Activated T-helper 1 cell treated with anti-CD3 and anti-CD28 coated beads, Interleukin-12 subunit alpha, Interleukin-12 subunit beta, Interleukin-2, Interleukin-4 antibody, amounts not matched to agents 30 ng/mL and 10 ng/mL and 1 ng/mL, durations not matched to agents 14 hours and 24 hours and 36 hours (primary cell): ENCODE measurements at regions of chr9 and their contacts with region 1.

Region 1: DNA sequence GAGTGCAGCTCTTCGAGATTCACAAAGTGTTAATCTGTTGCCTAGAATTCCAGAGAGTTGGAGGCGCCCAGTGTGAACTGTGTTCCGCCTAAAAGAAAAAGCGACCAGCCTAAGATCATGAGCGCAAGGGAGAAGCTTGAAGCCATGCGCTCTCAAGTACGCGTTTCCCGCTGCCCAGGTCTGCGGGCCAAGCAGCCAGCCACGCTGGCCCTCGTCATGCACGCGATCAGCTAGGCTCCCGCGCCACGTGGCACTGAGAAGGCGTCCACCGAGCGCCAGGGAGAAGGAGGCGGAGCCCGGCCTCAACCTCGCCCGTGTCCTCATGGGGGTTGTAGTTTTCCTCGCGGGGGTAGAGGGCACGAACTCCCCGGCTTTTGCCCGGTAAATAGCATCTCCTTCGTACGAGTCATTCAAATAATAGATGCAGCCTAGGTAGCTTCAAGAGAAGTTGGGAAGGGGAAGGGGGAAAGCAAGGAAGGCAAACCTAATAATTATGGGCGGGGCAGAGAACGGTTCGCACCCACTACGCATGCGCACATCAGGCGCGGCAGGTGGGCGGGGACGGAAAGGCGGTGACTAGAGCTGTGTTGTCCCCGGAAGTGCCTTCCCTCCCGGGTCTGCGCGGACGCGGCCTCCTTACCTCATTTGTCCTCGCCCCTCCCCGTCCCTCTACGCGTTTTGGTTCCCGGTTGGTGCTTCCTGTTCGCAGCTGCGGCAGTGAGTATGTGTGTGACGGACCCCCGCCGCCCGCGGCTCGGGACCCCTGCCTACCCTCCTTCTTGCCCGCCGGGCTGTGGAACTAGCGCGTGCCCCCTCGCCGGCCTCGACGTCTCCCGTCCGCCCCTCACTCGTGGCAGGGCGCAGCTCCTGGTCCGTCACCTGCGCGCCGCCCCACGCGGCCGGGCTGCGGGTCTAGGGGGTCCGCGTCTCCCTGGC is at the start of gene ZCCHC7:
- DNase-seq: peak; percentile 95
- H3K4me3 Mint-ChIP-seq: peak within 1 kb of the TSS; percentile 97
- H3K27ac Mint-ChIP-seq: peak within 1 kb of the TSS; percentile 99
- H3K4me1 Mint-ChIP-seq: peaks cover 32% of the 10 kb centered on the region
- H3K27me3 Mint-ChIP-seq: no peaks in the 10 kb centered on the region
- total RNA-seq, gene ZCCHC7: 22.1 and 26.0 TPM in 2 replicates

Region 2: GRCh38 chr9:36400332-36401163 is 719.6 kb before region 1 on chr9:
- intact Hi-C with region 1: loop called (anchors 2 kb)
- DNase-seq: peak; percentile 86
- H3K4me3 Mint-ChIP-seq: peak overlapping the region; percentile 89
- H3K27ac Mint-ChIP-seq: peak overlapping the region; percentile 97
- H3K4me1 Mint-ChIP-seq: peaks cover 47% of the 10 kb centered on the region
- H3K27me3 Mint-ChIP-seq: no peaks in the 10 kb centered on the region

Region 3: DNA sequence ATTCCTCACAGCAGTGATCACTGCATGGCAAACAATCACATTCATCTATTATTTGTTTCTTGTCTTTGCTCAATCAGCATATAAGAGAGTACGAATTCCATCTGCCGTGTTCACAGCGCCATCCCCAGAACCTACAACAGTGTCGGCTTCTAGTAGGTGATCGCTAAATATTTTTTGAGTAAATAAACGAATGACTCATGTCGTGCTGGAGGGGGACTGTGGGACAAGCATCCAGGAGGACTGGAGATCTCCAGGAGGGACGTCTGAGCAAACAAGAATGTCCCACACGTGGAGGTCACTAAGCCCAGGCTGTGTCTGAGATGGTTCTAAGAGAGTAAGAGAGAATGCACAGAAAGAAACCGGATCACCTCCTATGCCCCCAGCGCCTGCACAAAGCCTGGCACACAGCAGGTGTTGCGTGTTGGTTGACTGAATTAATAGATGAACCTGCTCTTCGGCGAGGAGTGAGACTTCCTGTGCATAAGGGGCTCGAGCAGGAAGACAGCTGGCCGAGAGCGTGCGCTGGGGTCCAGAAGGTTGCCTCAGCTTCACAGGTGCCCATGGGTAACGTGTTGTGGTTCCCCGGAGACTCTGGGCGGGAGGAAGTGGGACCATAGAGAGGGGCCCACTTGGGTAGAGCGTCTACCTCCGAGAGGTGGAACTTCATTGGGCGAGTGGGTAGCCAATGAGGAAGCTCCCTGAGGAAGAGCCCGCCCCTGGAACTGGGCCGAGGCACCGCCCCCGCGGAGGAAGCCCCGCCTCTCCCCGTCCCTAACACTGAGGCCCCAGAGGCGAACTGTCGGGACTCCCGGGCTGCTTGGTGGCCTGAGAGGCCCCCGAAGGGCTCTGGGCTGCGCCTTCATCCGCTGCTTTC is 354.5 kb before region 1 on chr9:
- intact Hi-C with region 1: loop called (anchors 5 kb)
- DNase-seq: peak; percentile 81
- H3K4me3 Mint-ChIP-seq: peak overlapping the region; percentile 46
- H3K27ac Mint-ChIP-seq: no peak overlapping the region
- H3K4me1 Mint-ChIP-seq: no peaks in the 10 kb centered on the region
- H3K27me3 Mint-ChIP-seq: peaks cover 4% of the 10 kb centered on the region

Region 4: GRCh38 chr9:37036776-37037502 is 83.2 kb before region 1 on chr9:
- intact Hi-C with region 1: loop called (anchors 2 kb)
- DNase-seq: peak; percentile 30
- H3K4me3 Mint-ChIP-seq: peak overlapping the region; percentile 72
- H3K27ac Mint-ChIP-seq: peak overlapping the region; percentile 46
- H3K4me1 Mint-ChIP-seq: peaks cover 25% of the 10 kb centered on the region
- H3K27me3 Mint-ChIP-seq: peaks cover 82% of the 10 kb centered on the region

Region 5: DNA sequence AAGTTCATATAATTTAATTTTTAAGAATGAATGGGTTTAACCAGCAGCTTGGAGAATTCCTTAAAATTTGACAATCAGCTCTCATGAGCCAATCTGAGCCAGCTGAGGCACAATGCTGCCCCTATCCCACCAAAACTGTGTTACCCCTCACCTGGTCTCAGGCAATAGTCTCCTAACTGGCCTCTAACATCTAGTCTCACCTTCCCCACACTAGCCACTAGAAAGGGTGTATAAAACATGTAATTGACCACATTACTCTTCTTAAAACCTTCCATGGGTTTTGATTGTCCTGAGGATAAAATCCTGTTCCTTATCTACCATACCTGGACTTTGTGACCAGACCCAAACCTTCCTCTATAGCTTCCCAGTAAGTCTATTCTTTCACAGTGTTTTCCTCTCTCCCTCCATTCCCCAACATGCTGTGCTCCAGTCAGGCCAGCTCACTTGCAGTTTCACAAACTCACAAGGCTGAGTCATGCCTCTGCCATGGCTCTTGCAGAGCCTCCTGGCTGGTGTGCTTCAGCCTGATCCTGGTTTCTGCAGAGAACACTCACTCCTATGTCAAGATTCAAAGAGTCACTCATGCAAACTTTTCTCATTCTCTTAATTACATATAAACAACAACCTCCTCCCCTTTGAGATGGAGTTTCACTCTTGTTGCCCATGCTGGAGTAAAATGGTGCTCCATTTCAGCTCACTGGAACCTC is 15.8 kb before region 1 on chr9:
- intact Hi-C with region 1: no loop called
- DNase-seq: no peak
- H3K4me3 Mint-ChIP-seq: no peak overlapping the region
- H3K27ac Mint-ChIP-seq: no peak overlapping the region
- H3K4me1 Mint-ChIP-seq: peaks cover 26% of the 10 kb centered on the region
- H3K27me3 Mint-ChIP-seq: peaks cover 3% of the 10 kb centered on the region

Region 6: GRCh38 chr9:37209431-37210386 is 89.5 kb after region 1 on chr9:
- intact Hi-C with region 1: loop called (anchors 2 kb)
- DNase-seq: no peak
- H3K4me3 Mint-ChIP-seq: no peak overlapping the region
- H3K27ac Mint-ChIP-seq: no peak overlapping the region
- H3K4me1 Mint-ChIP-seq: peaks cover 40% of the 10 kb centered on the region
- H3K27me3 Mint-ChIP-seq: no peaks in the 10 kb centered on the region

Region 7: GRCh38 chr9:37302277-37302676 is 182.1 kb after region 1 on chr9:
- intact Hi-C with region 1: loop called (anchors 1 kb)
- DNase-seq: peak; percentile 34
- H3K4me3 Mint-ChIP-seq: peak overlapping the region; percentile 57
- H3K27ac Mint-ChIP-seq: peak overlapping the region; percentile 78
- H3K4me1 Mint-ChIP-seq: peaks cover 42% of the 10 kb centered on the region
- H3K27me3 Mint-ChIP-seq: no peaks in the 10 kb centered on the region

Region 8: DNA sequence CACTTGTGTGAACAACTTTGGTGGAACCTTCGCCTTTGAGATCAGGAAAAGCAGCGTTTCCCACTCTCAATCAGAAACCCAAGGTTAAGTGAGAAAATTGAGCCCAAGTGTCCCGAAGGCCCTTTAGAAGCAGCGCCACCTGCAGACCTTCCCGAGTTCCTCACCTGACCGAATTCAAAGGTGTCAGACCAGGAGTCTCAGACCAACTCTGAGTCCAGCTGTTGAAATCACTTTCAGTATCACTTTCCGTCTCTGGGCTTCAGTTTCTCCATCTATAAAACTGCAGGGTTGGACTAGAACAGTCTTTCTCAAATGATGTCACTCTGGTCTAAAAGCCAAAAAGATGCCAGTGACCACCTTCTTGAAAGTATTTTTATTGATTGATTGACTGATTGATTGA is 270.6 kb after region 1 on chr9:
- intact Hi-C with region 1: no loop called
- DNase-seq: no peak
- H3K4me3 Mint-ChIP-seq: no peak overlapping the region
- H3K27ac Mint-ChIP-seq: no peak overlapping the region
- H3K4me1 Mint-ChIP-seq: no peaks in the 10 kb centered on the region
- H3K27me3 Mint-ChIP-seq: peaks cover under 1% of the 10 kb centered on the region

Region 9: DNA sequence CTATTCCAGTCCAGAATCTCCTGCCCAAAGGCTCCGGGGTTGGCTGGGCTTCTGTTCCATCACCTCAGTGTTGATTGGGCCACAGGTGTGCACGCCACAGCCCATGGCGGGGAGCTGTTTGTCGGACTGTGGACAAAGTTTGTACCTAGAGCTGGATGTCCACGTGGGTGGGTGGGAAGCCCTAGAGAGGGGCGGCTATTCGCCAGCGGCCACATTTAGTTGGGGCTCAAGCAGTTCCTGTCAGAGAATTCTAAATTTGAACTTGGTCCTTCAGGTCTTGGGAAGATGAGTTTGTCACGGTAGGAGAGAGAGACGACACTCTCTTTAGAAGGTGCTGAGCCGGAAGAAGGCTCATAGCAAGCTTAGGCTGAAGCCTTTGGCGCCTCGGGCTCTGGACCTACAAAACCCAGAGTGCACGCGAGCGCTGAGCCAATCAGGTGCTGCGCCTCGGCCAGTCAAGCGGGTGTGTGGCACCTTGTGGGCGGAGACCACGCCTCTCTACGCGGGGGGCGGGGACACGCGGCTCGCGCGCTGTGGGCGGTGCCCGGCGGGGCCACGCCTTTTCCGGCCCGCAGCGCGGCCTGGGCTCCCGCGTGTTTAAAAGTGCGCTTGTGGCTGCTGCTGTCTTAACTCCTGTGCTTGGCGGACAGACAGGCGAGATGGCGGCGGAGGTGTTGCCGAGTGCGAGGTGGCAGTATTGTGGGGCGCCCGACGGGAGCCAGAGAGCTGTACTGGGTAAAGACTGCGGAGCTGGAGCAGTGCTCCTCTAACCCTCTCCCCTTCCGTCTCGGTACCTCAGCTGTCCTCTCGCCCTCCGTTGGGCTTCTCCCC is 365.4 kb after region 1 on chr9 and contains the start of gene POLR1E:
- intact Hi-C with region 1: loop called (anchors 1 kb)
- DNase-seq: peak; percentile 95
- H3K4me3 Mint-ChIP-seq: peak within 1 kb of the TSS; percentile 96
- H3K27ac Mint-ChIP-seq: peak within 1 kb of the TSS; percentile 92
- H3K4me1 Mint-ChIP-seq: peaks cover 31% of the 10 kb centered on the region
- H3K27me3 Mint-ChIP-seq: peaks cover 8% of the 10 kb centered on the region
- total RNA-seq, gene POLR1E: 59.8 and 61.0 TPM in 2 replicates